Breast epithelium (tissue), 4 donors: ENCODE measurements at regions of chr3 and their contacts with region 1.

Region 1: DNA sequence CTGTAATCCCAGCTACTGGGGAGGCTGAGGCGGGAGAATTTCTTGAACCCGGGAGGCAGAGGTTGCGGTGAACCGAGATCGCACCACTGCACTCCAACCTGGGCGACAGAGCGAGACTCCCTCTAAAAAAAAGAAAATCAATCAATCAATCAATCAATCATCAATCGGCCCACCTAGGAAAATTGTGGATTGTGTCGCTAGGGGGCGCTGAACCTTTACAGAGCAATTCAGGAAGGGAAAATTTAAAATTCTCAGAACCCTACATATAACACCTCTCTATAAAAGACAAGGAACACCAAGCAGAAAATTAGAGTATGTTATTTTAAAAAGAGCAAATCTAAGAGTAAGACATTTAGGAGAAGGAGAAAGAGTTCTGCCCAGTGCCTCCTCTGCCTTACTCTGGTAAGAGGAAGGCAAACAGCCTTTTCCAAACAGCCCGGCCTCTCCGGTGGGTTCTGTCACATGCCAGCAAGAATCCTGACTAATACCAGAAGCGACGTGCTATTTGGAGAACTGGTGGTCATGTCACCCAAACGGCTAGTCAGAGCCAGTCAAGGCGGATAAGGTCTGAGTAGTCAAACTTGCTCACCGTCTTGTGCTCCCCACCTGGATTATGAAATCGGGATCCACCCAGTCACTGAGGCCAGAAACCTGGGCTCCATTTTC is 22.3 kb upstream of the SMCO1 start:
- DNase-seq: no peak
- H3K4me3 ChIP-seq: no peak overlapping the region
- H3K27ac ChIP-seq: no peak overlapping the region
- H3K4me1 ChIP-seq: no peaks in the 10 kb centered on the region
- H3K27me3 ChIP-seq: no peaks in the 10 kb centered on the region
- CTCF ChIP-seq: peak; percentile 31 to 63 (median 41)
- POLR2A ChIP-seq: no peak

Region 2: DNA sequence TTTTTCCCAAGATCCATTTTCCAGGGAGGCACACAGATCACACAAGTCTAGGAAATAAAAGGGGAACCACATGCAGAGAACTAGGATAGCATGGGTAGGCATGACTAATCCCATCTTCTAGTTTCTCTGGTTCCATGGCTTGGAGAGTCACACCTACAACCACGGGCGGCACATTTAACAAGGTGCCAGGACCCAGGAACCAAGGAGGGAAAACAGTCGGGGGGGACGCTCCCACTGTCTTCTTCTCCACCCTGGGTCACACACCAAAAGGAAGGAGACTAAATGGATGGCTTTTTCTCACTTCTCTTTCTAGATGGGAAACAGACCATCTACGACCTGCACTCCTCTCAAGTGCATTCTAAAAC is 17.8 kb before region 1 on chr3:
- intact Hi-C with region 1: loop called (anchors 1 kb)
- DNase-seq: no peak
- H3K4me3 ChIP-seq: no peak overlapping the region
- H3K27ac ChIP-seq: no peak overlapping the region
- H3K4me1 ChIP-seq: no peaks in the 10 kb centered on the region
- H3K27me3 ChIP-seq: no peaks in the 10 kb centered on the region
- CTCF ChIP-seq: no peak
- POLR2A ChIP-seq: no peak